MCF 10A (cell line): ENCODE measurements at regions of chr5 and their contacts with region 1.

Region 1: GRCh38 chr5:140639148-140639979 is at the start of gene TMCO6:
- DNase-seq: peak; percentile 99
- H3K4me3 Mint-ChIP-seq: peak within 1 kb of the TSS; percentile 83
- H3K27ac Mint-ChIP-seq: peak within 1 kb of the TSS; percentile 92
- H3K4me1 Mint-ChIP-seq: peaks cover 36% of the 10 kb centered on the region
- H3K27me3 Mint-ChIP-seq: no peaks in the 10 kb centered on the region
- CTCF ChIP-seq: peak; percentile 78
- total RNA-seq, gene TMCO6: 15.7 and 17.2 TPM in 2 replicates

Region 2: GRCh38 chr5:140547508-140548299 is 91.7 kb before region 1 on chr5 and contains the start of gene EIF4EBP3:
- CTCF ChIA-PET with region 1: interaction called, 42 read pairs
- POLR2A ChIA-PET with region 1: interaction called, 120 read pairs
- intact Hi-C with region 1: loop called (anchors 1 kb)
- DNase-seq: peak; percentile 97
- H3K4me3 Mint-ChIP-seq: peak within 1 kb of the TSS; percentile 77
- H3K27ac Mint-ChIP-seq: peak within 1 kb of the TSS; percentile 80
- H3K4me1 Mint-ChIP-seq: peaks cover 27% of the 10 kb centered on the region
- H3K27me3 Mint-ChIP-seq: no peaks in the 10 kb centered on the region
- CTCF ChIP-seq: peak; percentile 74
- total RNA-seq, gene EIF4EBP3: 25.3 and 35.3 TPM in 2 replicates

Region 3: GRCh38 chr5:140557136-140557805 is 82.1 kb before region 1 on chr5 and contains the start of gene SRA1:
- CTCF ChIA-PET with region 1: interaction called, 28 read pairs
- POLR2A ChIA-PET with region 1: interaction called, 25 read pairs
- intact Hi-C with region 1: no loop called
- DNase-seq: peak; percentile 96
- H3K4me3 Mint-ChIP-seq: peak within 1 kb of the TSS; percentile 87
- H3K27ac Mint-ChIP-seq: peak within 1 kb of the TSS; percentile 91
- H3K4me1 Mint-ChIP-seq: peaks cover 38% of the 10 kb centered on the region
- H3K27me3 Mint-ChIP-seq: no peaks in the 10 kb centered on the region
- CTCF ChIP-seq: no peak
- total RNA-seq, gene SRA1: 105 and 107 TPM in 2 replicates

Region 4: GRCh38 chr5:140575309-140575708 is 64.1 kb before region 1 on chr5:
- CTCF ChIA-PET with region 1: interaction called, 41 read pairs
- POLR2A ChIA-PET with region 1: interaction called, 169 read pairs
- intact Hi-C with region 1: loop called (anchors 1 kb)
- DNase-seq: peak; percentile 92
- H3K4me3 Mint-ChIP-seq: no peak overlapping the region
- H3K27ac Mint-ChIP-seq: no peak overlapping the region
- H3K4me1 Mint-ChIP-seq: no peaks in the 10 kb centered on the region
- H3K27me3 Mint-ChIP-seq: no peaks in the 10 kb centered on the region
- CTCF ChIP-seq: peak; percentile 82

Region 5: DNA sequence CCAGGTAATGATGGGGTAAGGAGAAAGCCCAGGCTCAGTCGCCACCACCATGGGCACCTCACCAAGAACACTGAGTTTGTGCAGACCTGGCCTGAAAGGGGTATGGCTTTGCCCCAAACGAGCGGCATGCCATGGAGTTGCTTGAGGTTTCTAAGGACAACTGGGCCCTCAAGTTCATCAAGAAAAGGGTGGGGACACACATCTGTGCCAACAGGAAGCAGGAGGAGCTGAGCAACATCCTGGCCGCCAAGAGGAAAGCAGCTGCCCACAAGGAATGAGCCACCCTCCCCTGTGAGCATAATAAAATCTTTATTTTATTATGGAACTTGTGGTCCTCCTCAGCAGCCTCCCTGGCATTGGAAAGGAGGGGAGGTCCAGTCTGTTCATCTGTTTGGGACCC is 30.2 kb before region 1 on chr5:
- CTCF ChIA-PET with region 1: interaction called, 3 read pairs
- POLR2A ChIA-PET with region 1: interaction called, 6 read pairs
- intact Hi-C with region 1: loop called (anchors 1 kb)
- DNase-seq: peak; percentile 77
- H3K4me3 Mint-ChIP-seq: no peak overlapping the region
- H3K27ac Mint-ChIP-seq: peak overlapping the region; percentile 32
- H3K4me1 Mint-ChIP-seq: peaks cover 29% of the 10 kb centered on the region
- H3K27me3 Mint-ChIP-seq: no peaks in the 10 kb centered on the region
- CTCF ChIP-seq: no peak